ENCODE measurements at regions of chr15 and their contacts with region 1.

Region 1: DNA sequence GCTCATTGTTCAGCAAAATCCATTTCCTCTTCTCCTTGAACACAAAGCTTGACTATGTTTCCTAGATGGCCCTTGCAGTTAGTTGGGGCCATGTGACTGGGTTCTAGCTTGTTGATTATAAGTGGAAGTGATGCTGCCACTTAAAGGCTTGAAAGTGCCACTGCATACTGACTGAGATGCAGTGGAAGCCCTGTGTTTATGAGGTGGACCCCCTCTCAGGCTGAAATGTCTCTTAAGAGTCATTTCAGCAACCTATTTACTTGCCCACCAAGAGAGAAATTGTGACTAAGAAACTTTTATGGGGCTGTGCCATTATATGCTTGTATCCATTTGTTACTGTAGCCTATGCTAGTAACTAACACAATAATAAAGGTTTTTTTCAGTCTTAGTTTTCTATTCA is 8.4 kb upstream of the ANP32A start:
- DNase-seq: peak in 6 of 9 donors; percentile 17 to 41 (median 22)
- ATAC-seq: peak; percentile 85
- H3K4me3 ChIP-seq: no peak overlapping the region
- H3K4me3 Mint-ChIP-seq: no peak overlapping the region
- H3K27ac ChIP-seq: no peak overlapping the region
- H3K27ac Mint-ChIP-seq: no peak overlapping the region
- H3K4me1 ChIP-seq: peaks cover 0 to 4% of the 10 kb centered on the region in 2 donors
- H3K4me1 Mint-ChIP-seq: peaks cover 9 to 28% (median 19%) of the 10 kb centered on the region in 7 donors
- H3K27me3 ChIP-seq: no peaks in the 10 kb centered on the region
- H3K27me3 Mint-ChIP-seq: peaks cover 0 to 11% (median 0%) of the 10 kb centered on the region in 5 donors

Region 2: GRCh38 chr15:68672781-68673205 is 156.3 kb before region 1 on chr15:
- CTCF ChIA-PET with region 1: interaction called, 8 read pairs
- POLR2A ChIA-PET with region 1: no interaction called
- intact Hi-C with region 1: loop called in 1 of 2 experiments (anchors 2 kb)
- DNase-seq: no peak
- ATAC-seq: no peak
- H3K4me3 ChIP-seq: no peak overlapping the region
- H3K4me3 Mint-ChIP-seq: no peak overlapping the region
- H3K27ac ChIP-seq: no peak overlapping the region
- H3K27ac Mint-ChIP-seq: no peak overlapping the region
- H3K4me1 ChIP-seq: no peaks in the 10 kb centered on the region
- H3K4me1 Mint-ChIP-seq: peaks cover 0 to 6% (median 4%) of the 10 kb centered on the region in 7 donors
- H3K27me3 ChIP-seq: no peaks in the 10 kb centered on the region
- H3K27me3 Mint-ChIP-seq: peaks cover 6 to 17% (median 12%) of the 10 kb centered on the region in 5 donors

Region 3: GRCh38 chr15:68730471-68730919 is 98.6 kb before region 1 on chr15:
- CTCF ChIA-PET with region 1: interaction called, 3 read pairs
- POLR2A ChIA-PET with region 1: no interaction called
- intact Hi-C with region 1: loop called (anchors 1 kb)
- DNase-seq: peak in 6 of 9 donors; percentile 8 to 40 (median 18)
- ATAC-seq: no peak
- H3K4me3 ChIP-seq: no peak overlapping the region
- H3K4me3 Mint-ChIP-seq: no peak overlapping the region
- H3K27ac ChIP-seq: no peak overlapping the region
- H3K27ac Mint-ChIP-seq: no peak overlapping the region
- H3K4me1 ChIP-seq: no peaks in the 10 kb centered on the region
- H3K4me1 Mint-ChIP-seq: peaks cover 0 to 7% (median 4%) of the 10 kb centered on the region in 7 donors
- H3K27me3 ChIP-seq: no peaks in the 10 kb centered on the region
- H3K27me3 Mint-ChIP-seq: peaks cover 0 to 18% (median 0%) of the 10 kb centered on the region in 5 donors

Region 4: GRCh38 chr15:69185706-69186105 is 356.6 kb after region 1 on chr15:
- CTCF ChIA-PET with region 1: no interaction called
- POLR2A ChIA-PET with region 1: no interaction called
- intact Hi-C with region 1: no loop called
- DNase-seq: no peak
- ATAC-seq: no peak
- H3K4me3 ChIP-seq: no peak overlapping the region
- H3K4me3 Mint-ChIP-seq: no peak overlapping the region
- H3K27ac ChIP-seq: no peak overlapping the region
- H3K27ac Mint-ChIP-seq: no peak overlapping the region
- H3K4me1 ChIP-seq: no peaks in the 10 kb centered on the region
- H3K4me1 Mint-ChIP-seq: no peaks in the 10 kb centered on the region
- H3K27me3 ChIP-seq: no peaks in the 10 kb centered on the region
- H3K27me3 Mint-ChIP-seq: no peaks in the 10 kb centered on the region

Region 5: GRCh38 chr15:70815644-70816043 is 1986.6 kb after region 1 on chr15:
- CTCF ChIA-PET with region 1: no interaction called
- POLR2A ChIA-PET with region 1: no interaction called
- intact Hi-C with region 1: no loop called
- DNase-seq: no peak
- ATAC-seq: no peak
- H3K4me3 ChIP-seq: no peak overlapping the region
- H3K4me3 Mint-ChIP-seq: no peak overlapping the region
- H3K27ac ChIP-seq: no peak overlapping the region
- H3K27ac Mint-ChIP-seq: no peak overlapping the region
- H3K4me1 ChIP-seq: no peaks in the 10 kb centered on the region
- H3K4me1 Mint-ChIP-seq: peaks cover 0 to 5% (median 4%) of the 10 kb centered on the region in 7 donors
- H3K27me3 ChIP-seq: no peaks in the 10 kb centered on the region
- H3K27me3 Mint-ChIP-seq: peaks cover 0 to 5% (median under 1%) of the 10 kb centered on the region in 5 donors